Lower leg skin (tissue), 4 donors: ENCODE measurements at regions of chr11 and their contacts with region 1.

Region 1: DNA sequence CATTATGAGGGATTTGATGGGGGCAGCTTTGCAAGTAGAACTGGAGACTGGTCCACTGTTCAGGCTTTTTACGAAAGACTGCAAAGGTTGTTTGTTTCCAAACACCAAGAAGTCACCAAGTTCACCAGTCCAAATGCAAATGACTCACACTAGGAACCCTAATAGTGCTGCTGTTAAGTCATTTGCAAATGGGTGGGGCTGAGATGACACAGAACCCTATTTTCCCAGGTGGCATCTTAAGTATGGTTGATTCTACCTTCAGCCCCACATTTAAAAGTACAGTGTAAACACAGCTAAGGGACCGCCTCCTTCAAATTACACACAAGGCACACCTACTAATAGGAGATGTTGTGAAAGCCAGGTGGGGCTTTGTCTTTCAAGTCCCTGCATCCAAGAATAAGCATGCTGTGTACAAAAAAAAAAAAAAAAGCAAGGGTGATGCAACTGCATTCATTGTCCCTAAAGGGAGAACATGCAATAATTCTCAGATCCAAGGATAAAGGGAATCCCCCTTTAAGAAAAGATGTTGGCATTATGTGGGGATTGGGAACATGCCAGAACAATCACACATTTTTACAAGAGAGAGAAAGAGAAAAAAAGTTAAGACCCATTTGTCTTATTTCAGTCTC is 27.3 kb downstream of the BDNF start:
- DNase-seq: peak in 1 of 2 donors; percentile 21
- H3K4me3 ChIP-seq: no peak overlapping the region
- CTCF ChIP-seq: no peak
- POLR2A ChIP-seq: no peak

Region 2: DNA sequence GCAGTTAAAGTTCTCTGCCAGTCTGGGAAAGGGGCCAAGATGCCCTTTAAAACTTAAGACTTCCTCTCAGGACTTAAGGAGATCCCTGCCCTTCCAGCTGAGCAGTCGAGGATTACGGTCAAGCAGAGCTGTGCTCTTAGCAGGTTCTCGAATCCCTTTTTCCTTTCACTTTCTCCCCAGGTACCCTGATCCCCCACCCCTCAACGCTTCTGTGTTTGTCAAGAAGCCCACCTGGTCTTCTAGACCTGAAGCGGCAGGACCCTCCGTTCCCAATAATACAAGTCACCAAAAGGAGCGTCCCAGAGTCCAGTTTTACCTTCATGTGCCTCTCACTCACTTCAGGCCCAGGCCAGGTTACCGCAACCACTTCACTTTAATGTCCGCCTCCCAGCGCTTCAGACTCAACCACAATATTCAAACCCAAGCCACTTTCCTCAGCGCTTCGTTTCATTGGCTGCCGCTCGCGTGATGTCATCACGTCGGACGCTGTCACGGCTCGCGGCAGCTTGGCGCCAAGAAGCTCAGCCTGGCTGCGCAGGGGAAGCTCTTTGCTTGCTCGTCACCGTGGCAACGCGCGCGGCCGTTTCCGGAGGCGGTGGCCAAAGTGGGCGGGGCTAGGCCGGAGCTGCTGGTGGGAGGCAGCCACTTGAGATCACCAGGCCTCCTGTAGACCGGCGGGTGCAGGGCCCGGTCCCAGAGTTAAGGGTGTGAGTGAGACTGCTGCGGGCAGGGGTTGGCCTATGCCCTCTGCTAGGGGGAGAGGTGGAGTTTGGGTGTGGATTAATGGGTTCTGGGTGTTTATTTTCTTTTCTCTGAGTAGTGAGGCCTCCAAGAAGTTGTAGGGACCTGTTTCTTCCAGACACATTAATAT is 435.0 kb after region 1 on chr11 and contains the starts of genes KIF18A and METTL15:
- intact Hi-C with region 1: loop called (anchors 10 kb)
- DNase-seq: peak; percentile 100
- H3K4me3 ChIP-seq: peak within 1 kb of the TSS; percentile 48
- CTCF ChIP-seq: no peak
- POLR2A ChIP-seq: peak in 1 of 2 donors; percentile 32
- total RNA-seq, gene KIF18A: 0.38 to 1.5 (median 1.1) TPM
- total RNA-seq, gene METTL15: 5.4 to 12.9 (median 8.5) TPM